Caco-2 (cell line): ENCODE measurements at regions of chr6 and their contacts with region 1.

Region 1: DNA sequence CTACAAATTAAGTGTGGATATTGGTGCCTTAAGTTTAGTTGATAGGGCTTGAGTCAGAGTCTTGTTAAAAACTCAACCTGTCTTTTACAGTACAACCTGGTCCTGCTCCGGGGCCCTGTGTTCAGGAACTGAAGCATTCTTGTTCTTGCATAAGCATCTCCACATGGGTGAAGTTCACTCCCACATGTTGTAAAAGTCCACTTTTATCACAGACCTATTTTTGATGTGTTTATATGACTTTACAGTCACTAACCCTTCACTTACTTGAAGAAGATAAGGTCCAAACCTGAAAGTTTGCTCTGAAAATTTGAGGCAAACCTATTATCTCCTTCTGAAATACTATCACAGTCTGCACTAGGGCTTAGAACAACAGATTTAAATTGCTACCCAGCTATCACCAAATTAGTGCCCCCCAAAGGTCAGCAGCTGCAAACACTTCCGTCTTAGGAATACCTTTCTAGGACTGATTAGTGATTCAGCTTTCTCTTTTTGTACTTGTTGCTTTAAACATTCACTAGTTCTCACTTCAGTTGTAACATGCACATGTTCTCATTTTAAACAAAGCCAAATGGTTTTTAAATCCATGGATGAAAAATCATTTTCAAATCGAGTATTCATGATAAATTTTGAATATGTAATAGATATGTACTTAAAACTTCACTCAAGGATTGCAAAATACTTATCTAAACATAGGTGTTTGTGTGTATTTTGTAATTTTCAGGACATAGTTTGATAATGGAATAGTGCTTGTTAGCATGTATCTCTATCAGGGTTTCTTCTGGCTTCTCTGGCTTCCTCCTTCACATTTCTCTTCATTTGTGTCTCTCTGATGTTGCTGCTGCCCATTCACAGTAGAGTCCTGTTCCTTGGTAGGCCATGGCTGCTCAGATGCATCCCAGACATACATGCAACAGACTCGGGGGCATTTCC is 469.8 kb upstream of the SOX4 start:
- DNase-seq: peak; percentile 27 to 44
- H3K4me3 ChIP-seq: no peak overlapping the region
- H3K4me3 Mint-ChIP-seq: no peak overlapping the region
- H3K27ac Mint-ChIP-seq: peak overlapping the region; percentile 65
- H3K4me1 ChIP-seq: peaks cover 15% of the 10 kb centered on the region
- H3K4me1 Mint-ChIP-seq: peaks cover 13% of the 10 kb centered on the region
- H3K27me3 ChIP-seq: no peaks in the 10 kb centered on the region
- H3K27me3 Mint-ChIP-seq: no peaks in the 10 kb centered on the region
- CTCF ChIP-seq: no peak

Region 2: DNA sequence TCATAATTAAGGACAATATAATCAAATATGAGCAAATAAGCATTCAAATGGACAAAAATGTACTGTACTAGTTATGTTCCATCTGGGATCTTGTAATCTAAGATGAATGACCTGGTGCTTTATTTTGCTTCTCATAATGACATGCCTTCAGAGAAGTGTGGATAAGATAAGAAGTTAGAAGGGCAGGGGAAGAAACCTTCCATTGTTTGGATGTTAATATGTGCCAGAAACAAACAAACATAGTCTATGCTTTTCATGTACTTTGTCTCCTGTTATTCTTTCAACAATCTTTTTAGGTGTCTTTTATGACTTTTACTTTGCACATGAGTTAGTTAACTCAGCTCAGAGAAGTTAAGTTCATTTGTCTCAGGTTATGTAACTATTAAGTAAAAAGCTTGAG is 41.7 kb before region 1 on chr6:
- CTCF ChIA-PET with region 1: no interaction called
- POLR2A ChIA-PET with region 1: no interaction called
- intact Hi-C with region 1: loop called (anchors 1 kb)
- DNase-seq: peak in 1 of 2 experiments; percentile 34
- H3K4me3 ChIP-seq: no peak overlapping the region
- H3K4me3 Mint-ChIP-seq: peak overlapping the region; percentile 1
- H3K27ac Mint-ChIP-seq: no peak overlapping the region
- H3K4me1 ChIP-seq: peaks cover 31% of the 10 kb centered on the region
- H3K4me1 Mint-ChIP-seq: peaks cover 21% of the 10 kb centered on the region
- H3K27me3 ChIP-seq: no peaks in the 10 kb centered on the region
- H3K27me3 Mint-ChIP-seq: no peaks in the 10 kb centered on the region
- CTCF ChIP-seq: no peak

Region 3: DNA sequence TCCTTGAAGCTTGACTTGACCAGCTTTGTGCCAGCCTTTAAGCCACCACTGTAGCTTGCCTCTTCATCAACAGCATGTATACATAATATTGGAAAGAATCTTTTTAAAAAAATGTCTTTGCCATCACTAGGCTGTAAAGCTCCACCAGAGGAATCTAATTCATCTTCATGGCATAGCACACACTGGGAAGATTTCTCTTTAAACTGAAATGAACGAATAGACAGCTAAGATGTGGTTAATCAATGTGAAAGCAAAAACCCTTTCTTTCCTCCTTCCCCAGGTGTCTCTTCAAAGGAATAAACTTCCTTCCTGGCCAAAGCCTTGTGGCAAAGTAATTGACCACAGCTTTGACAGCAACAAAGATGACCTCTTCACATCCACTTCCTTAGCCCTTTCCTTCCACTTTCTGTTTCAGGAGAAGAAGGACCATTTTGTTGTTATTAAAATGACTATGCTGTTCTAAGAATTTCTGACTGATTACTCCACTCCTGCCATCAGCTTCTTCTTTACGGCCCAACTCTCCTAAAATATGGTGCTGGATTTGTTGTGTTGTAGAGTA is 41.1 kb after region 1 on chr6:
- CTCF ChIA-PET with region 1: no interaction called
- POLR2A ChIA-PET with region 1: no interaction called
- intact Hi-C with region 1: loop called (anchors 1 kb)
- DNase-seq: no peak
- H3K4me3 ChIP-seq: no peak overlapping the region
- H3K4me3 Mint-ChIP-seq: no peak overlapping the region
- H3K27ac Mint-ChIP-seq: no peak overlapping the region
- H3K4me1 ChIP-seq: no peaks in the 10 kb centered on the region
- H3K4me1 Mint-ChIP-seq: peaks cover 6% of the 10 kb centered on the region
- H3K27me3 ChIP-seq: no peaks in the 10 kb centered on the region
- H3K27me3 Mint-ChIP-seq: no peaks in the 10 kb centered on the region
- CTCF ChIP-seq: no peak